Activated T-helper 2 cell treated with anti-CD3 and anti-CD28 coated beads, Interferon-gamma antibody, Interleukin-2, Interleukin-4, amounts not matched to agents 10 μg/mL and 5 μg/mL and 100 μg/mL, durations not matched to agents 14 hours and 24 hours and 36 hours (primary cell): ENCODE measurements at regions of chr12 and their contacts with region 1.

Region 1: GRCh38 chr12:131608740-131609690 is 101.9 kb upstream of the SFSWAP start:
- DNase-seq: peak; percentile 46
- H3K4me3 Mint-ChIP-seq: no peak overlapping the region
- H3K27ac Mint-ChIP-seq: peak overlapping the region; percentile 17
- H3K4me1 Mint-ChIP-seq: peaks cover 51% of the 10 kb centered on the region
- H3K27me3 Mint-ChIP-seq: peaks cover 2% of the 10 kb centered on the region

Region 2: GRCh38 chr12:131218026-131218922 is 390.7 kb before region 1 on chr12:
- intact Hi-C with region 1: loop called (anchors 10 kb)
- DNase-seq: no peak
- H3K4me3 Mint-ChIP-seq: no peak overlapping the region
- H3K27ac Mint-ChIP-seq: no peak overlapping the region
- H3K4me1 Mint-ChIP-seq: peaks cover 6% of the 10 kb centered on the region
- H3K27me3 Mint-ChIP-seq: peaks cover 8% of the 10 kb centered on the region

Region 3: DNA sequence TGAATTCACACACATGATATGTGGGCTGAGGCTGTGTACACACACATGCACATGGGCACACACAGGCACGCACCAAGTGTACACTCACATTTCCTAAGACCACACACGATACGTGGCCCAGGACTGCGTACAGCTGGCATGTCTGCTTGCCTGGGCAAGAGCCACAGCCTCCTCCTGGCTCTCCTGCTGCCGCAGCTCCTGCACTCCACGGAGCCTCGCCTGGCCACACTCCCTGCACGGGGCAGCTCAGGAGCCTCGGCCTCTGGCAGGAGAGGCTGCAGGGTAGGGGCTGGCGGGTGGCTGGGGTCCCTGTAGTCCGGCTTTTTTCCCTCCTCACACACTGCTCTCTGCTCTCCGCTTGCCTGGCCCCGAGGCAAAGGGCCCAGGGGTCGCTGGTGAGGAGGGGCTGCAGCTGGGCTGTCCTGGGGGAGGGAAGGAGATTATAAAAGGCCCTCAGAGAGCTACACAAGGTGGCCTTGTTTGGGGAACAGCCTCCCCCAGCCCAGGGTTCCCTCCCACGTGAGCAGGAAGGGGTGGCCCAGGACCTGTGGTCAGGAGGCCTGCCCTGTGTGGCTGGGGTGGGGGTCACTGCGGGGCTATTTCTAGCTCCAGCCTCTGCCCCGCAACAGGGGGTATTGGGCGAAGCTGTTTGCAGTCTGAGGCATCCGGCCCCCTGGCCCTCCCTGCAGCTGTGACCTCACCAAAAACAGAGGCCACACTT is 12.8 kb after region 1 on chr12:
- intact Hi-C with region 1: loop called (anchors 2 kb)
- DNase-seq: no peak
- H3K4me3 Mint-ChIP-seq: no peak overlapping the region
- H3K27ac Mint-ChIP-seq: no peak overlapping the region
- H3K4me1 Mint-ChIP-seq: no peaks in the 10 kb centered on the region
- H3K27me3 Mint-ChIP-seq: no peaks in the 10 kb centered on the region

Region 4: DNA sequence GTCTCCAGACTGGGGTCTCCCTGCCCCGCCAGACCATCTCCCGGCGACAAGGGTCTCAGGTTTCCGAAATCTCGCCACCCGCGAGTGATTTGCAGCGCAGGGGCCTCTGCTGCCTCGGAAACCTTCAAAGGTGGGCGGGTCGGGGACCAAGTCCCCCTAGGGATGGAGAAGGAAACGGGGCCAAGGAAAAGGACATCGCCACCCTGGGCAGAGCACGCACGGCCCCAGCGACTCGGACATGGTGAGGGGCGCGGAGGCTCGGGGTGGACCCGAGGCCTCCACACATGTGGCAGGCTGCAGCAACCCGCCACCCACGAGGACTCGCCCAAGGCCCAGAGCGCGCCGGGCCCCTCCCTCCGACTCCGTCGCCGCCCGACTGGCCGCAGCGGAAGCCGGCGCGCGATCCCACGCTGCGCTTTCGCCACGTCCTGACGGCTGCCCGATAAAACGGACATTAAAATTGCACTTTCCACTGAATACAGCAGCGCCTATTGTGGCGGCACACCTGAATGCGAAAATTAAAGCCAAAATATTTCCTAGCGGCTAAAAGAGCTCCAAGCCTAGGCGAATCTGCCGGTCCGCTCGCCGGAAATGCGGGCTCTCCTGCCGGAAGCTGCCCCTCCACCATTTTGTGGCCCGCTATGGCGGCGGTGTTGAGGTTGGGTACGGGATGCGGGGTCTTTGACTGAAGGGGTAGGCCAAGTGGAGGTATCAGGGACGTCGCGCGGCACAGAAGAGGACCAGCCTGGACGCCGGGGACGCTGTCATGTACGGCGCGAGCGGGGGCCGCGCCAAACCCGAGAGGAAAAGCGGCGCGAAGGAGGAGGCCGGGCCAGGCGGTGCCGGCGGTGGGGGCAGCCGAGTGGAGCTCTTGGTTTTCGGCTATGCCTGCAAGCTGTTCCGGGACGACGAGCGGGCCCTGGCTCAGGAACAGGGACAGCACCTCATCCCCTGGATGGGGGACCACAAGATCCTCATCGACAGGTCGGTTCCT is 101.7 kb after region 1 on chr12 and contains the start of gene SFSWAP:
- intact Hi-C with region 1: loop called (anchors 2 kb)
- DNase-seq: peak; percentile 74
- H3K4me3 Mint-ChIP-seq: peak within 1 kb of the TSS; percentile 87
- H3K27ac Mint-ChIP-seq: peak within 1 kb of the TSS; percentile 86
- H3K4me1 Mint-ChIP-seq: peaks cover 24% of the 10 kb centered on the region
- H3K27me3 Mint-ChIP-seq: peaks cover 3% of the 10 kb centered on the region
- total RNA-seq, gene SFSWAP: 58.5 and 60.1 TPM in 2 replicates

Region 5: DNA sequence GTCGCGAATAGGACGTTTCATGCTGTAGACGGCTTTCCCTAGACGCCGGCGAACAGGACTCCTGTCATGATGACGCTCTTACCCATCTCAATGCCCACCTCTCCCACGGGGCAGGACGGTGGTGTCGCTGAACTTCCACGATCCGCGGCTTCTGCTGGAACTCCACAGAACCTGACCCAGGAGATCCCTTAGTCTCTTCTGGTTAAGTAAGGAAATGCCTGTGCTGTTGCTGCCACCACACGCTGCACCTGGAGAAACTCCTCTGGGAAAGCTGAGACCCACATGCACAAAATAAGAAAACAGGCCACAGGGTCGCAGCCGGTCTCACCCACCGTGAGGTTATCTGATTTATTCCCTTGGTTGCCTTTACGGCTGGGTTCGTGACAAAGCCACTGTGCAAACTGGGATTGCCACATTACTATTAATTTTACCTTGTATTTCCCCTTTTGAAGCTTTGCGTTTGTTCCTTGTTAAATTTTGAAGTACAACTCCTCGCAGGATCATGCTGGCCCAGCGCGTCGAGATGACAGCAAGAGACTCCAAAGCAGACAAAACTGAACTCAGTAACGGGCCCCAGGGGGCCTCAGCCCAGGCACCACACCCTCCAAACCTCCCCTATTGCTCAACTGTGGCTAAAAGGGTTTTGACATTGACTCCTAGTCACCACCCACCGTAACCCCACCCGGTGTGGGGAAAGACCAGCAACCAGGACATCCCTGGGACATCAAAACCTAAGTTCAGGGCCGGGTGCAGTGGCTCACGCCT is 210.0 kb after region 1 on chr12:
- intact Hi-C with region 1: no loop called
- DNase-seq: no peak
- H3K4me3 Mint-ChIP-seq: no peak overlapping the region
- H3K27ac Mint-ChIP-seq: no peak overlapping the region
- H3K4me1 Mint-ChIP-seq: no peaks in the 10 kb centered on the region
- H3K27me3 Mint-ChIP-seq: no peaks in the 10 kb centered on the region